ENCODE measurements at regions of chr20 and their contacts with region 1.

Region 1: GRCh38 chr20:47487175-47487917 is 14.3 kb upstream of the NCOA3 start:
- DNase-seq: peak; percentile 53 to 85
- ATAC-seq: peak; percentile 78 to 90 (median 85)
- H3K4me3 ChIP-seq: no peak overlapping the region
- H3K4me3 Mint-ChIP-seq: peak overlapping the region; percentile 87
- H3K27ac ChIP-seq: peak overlapping the region; percentile 91
- H3K27ac Mint-ChIP-seq: peak overlapping the region; percentile 95 to 99
- H3K4me1 ChIP-seq: peaks cover 39% of the 10 kb centered on the region
- H3K4me1 Mint-ChIP-seq: peaks cover 22 to 29% of the 10 kb centered on the region in 2 donors
- H3K27me3 ChIP-seq: no peaks in the 10 kb centered on the region
- H3K27me3 Mint-ChIP-seq: no peaks in the 10 kb centered on the region
- CTCF ChIP-seq: no peak

Region 2: DNA sequence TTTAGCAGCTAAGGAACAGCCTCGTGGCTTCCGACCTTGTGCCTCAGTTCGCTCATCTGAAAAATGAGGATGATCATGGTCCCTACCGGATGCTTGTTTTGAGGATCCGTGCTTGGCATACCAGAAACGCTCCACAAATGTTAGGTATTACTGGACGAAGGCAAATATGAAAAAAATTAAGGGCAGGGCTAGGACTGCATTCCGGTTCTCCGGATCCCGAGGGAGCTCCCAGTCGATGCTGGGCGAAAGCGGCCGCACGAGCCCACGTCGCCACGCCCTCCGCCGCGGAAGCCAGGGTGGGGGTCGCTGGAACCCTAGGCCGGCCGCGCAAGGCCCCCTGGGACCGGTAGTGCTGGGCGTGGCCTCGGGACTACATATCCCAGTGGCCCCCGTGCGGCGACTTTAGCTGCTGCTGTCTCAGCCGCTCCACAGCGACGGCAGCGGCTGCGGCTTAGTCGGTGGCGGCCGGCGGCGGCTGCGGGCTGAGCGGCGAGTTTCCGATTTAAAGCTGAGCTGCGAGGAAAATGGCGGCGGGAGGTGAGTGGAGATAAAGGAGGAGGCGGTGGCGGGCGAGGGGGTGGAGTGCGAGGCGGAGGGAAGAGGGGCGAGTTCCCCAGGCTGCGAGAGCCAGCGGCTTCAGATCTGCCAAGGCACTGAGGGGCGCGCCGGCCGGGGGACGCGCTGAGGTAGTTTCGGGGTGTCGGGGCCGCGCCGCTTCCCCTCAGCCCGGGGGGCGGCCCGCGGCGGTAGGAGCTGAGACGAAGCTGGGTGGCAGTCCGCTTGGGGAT is 14.3 kb after region 1 on chr20 and contains the start of gene NCOA3:
- intact Hi-C with region 1: loop called (anchors 1 kb)
- DNase-seq: peak; percentile 84 to 91
- ATAC-seq: peak; percentile 83 to 88 (median 86)
- H3K4me3 ChIP-seq: peak within 1 kb of the TSS; percentile 97
- H3K4me3 Mint-ChIP-seq: peak within 1 kb of the TSS; percentile 98
- H3K27ac ChIP-seq: peak within 1 kb of the TSS; percentile 81
- H3K27ac Mint-ChIP-seq: peak within 1 kb of the TSS; percentile 91 to 98
- H3K4me1 ChIP-seq: peaks cover 9% of the 10 kb centered on the region
- H3K4me1 Mint-ChIP-seq: peaks cover 29 to 35% of the 10 kb centered on the region in 2 donors
- H3K27me3 ChIP-seq: no peaks in the 10 kb centered on the region
- H3K27me3 Mint-ChIP-seq: no peaks in the 10 kb centered on the region
- CTCF ChIP-seq: peak; percentile 32
- total RNA-seq, gene NCOA3: 44.3 to 63.3 (median 57.8) TPM

Region 3: DNA sequence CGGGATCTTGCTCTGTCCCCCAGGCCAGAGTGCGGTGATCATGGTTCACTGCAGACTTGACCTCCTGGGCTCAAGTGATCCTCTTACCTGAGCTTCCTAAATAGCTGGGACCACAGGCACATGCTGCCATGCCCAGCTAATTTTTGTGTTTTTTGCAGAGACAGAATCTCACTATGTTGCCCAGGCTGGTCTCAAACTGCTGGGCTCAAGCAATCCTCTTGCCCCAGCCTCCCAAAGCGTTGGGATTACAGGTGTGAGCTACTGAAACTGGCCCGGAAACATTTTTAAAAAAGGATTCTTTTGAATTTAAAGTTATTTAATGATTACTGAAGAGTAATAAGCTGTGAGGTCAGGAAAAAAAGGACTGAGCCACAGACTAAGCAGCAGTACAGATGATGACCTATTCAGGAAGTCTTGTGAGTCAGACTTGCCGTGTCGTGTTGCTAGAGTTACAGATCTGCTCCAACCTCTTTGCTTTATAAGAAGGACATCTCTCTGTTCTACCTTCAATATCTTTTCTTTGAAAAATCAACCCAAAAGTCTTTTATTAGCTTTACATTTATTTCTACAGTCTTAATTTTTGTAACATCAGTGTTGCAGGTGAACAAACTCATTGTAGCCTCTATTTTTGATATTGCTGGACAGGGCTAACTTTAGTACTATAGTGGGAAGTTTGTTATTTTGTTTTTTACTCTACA is 123.0 kb after region 1 on chr20:
- intact Hi-C with region 1: loop called (anchors 2 kb)
- DNase-seq: peak; percentile 57 to 67
- ATAC-seq: peak; percentile 89 to 95 (median 93)
- H3K4me3 ChIP-seq: no peak overlapping the region
- H3K4me3 Mint-ChIP-seq: peak overlapping the region; percentile 33
- H3K27ac ChIP-seq: peak overlapping the region; percentile 49
- H3K27ac Mint-ChIP-seq: peak overlapping the region; percentile 82 to 89
- H3K4me1 ChIP-seq: peaks cover 7% of the 10 kb centered on the region
- H3K4me1 Mint-ChIP-seq: peaks cover 37 to 48% of the 10 kb centered on the region in 2 donors
- H3K27me3 ChIP-seq: no peaks in the 10 kb centered on the region
- H3K27me3 Mint-ChIP-seq: no peaks in the 10 kb centered on the region
- CTCF ChIP-seq: no peak

Measured in natural killer cell (primary cell).